ENCODE measurements at regions of chr7 and their contacts with region 1.

Region 1: GRCh38 chr7:92621026-92621540 is 30.9 kb upstream of the FAM133B start:
- DNase-seq: peak; percentile 79
- ATAC-seq: peak; percentile 79
- H3K4me3 ChIP-seq: peak overlapping the region; percentile 12; the same call in 1 of the 2 replicates
- H3K27ac ChIP-seq: peak overlapping the region; percentile 75
- H3K4me1 ChIP-seq: peaks cover 16% of the 10 kb centered on the region
- H3K27me3 ChIP-seq: no peaks in the 10 kb centered on the region
- CTCF ChIP-seq: peak; percentile 64 to 94 (median 76); a peak in 5 of 6 replicates
- EP300 ChIP-seq: no peak
- POLR2A ChIP-seq: no peak
- RAD21 ChIP-seq: peak; percentile 95

Region 2: DNA sequence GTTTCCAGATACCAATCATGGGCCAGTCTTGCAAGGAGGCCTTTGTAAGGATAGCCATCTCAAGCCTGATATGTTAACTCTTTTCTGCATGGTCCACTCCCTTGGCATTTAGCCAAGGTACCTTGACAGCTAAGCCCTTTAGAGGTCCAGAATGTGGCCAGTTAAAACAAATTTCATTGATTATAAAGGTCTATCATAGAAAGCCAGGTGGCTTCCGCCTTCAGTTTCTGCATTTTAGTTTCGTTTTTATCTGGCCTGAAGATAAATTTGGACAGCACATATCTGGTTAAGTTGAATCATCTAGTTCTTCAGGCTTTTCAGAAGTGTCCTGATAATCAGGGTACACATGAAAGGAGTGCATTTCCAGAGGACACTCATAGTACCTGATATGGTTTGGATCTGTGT is 344.6 kb before region 1 on chr7:
- CTCF ChIA-PET with region 1: no interaction called
- POLR2A ChIA-PET with region 1: no interaction called
- RAD21 ChIA-PET with region 1: no interaction called
- SMC1A ChIA-PET with region 1: no interaction called
- in situ Hi-C with region 1: no loop called
- intact Hi-C with region 1: no loop called
- DNase-seq: peak; percentile 51
- ATAC-seq: peak; percentile 93
- H3K4me3 ChIP-seq: peak overlapping the region; percentile 42
- H3K27ac ChIP-seq: peak overlapping the region; percentile 78
- H3K4me1 ChIP-seq: peaks cover 10% of the 10 kb centered on the region; the same call in 1 of the 2 replicates
- H3K27me3 ChIP-seq: no peaks in the 10 kb centered on the region
- CTCF ChIP-seq: no peak
- EP300 ChIP-seq: no peak
- POLR2A ChIP-seq: no peak
- RAD21 ChIP-seq: no peak

Region 3: GRCh38 chr7:92609921-92610518 is 11.1 kb before region 1 on chr7:
- CTCF ChIA-PET with region 1: interaction called, 30 read pairs
- POLR2A ChIA-PET with region 1: no interaction called
- RAD21 ChIA-PET with region 1: interaction called, 5 read pairs
- SMC1A ChIA-PET with region 1: interaction called, 19 read pairs
- in situ Hi-C with region 1: no loop called
- intact Hi-C with region 1: no loop called
- DNase-seq: no peak
- ATAC-seq: peak; percentile 80
- H3K4me3 ChIP-seq: no peak overlapping the region
- H3K27ac ChIP-seq: no peak overlapping the region
- H3K4me1 ChIP-seq: no peaks in the 10 kb centered on the region
- H3K27me3 ChIP-seq: no peaks in the 10 kb centered on the region
- CTCF ChIP-seq: peak in 2 of 3 experiments; percentile 29 to 42; a peak in 4 of 6 replicates
- EP300 ChIP-seq: no peak
- POLR2A ChIP-seq: no peak
- RAD21 ChIP-seq: peak; percentile 35; the same call in 1 of the 2 replicates

Region 4: DNA sequence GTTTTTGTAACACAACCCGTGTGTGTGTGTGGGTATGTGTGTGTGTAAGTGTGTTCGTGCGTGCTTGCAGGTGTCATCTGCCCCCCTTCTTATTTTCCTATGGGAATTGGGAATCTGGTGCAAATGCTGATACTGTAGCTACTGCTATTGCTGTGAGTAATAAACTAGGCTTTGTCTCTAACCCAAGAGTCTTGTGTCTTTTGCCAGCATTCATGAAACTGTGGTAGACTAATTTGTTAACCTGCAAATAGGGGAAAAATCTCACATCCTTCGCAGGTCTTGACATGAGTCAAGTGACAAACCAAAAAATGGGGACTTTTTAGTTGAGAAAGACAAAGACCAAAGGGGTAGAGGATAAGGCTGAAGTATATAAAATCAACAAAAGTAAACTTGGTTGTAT is 27.0 kb after region 1 on chr7:
- CTCF ChIA-PET with region 1: interaction called, 16 read pairs
- POLR2A ChIA-PET with region 1: no interaction called
- RAD21 ChIA-PET with region 1: interaction called, 17 read pairs
- SMC1A ChIA-PET with region 1: interaction called, 19 read pairs
- in situ Hi-C with region 1: no loop called
- intact Hi-C with region 1: loop called (anchors 2 kb)
- DNase-seq: peak; percentile 74
- ATAC-seq: peak; percentile 72
- H3K4me3 ChIP-seq: no peak overlapping the region
- H3K27ac ChIP-seq: peak overlapping the region; percentile 23; the same call in 1 of the 2 replicates
- H3K4me1 ChIP-seq: peaks cover 23% of the 10 kb centered on the region
- H3K27me3 ChIP-seq: no peaks in the 10 kb centered on the region
- CTCF ChIP-seq: no peak
- EP300 ChIP-seq: peak; percentile 86 to 92
- POLR2A ChIP-seq: no peak
- RAD21 ChIP-seq: no peak

Region 5: DNA sequence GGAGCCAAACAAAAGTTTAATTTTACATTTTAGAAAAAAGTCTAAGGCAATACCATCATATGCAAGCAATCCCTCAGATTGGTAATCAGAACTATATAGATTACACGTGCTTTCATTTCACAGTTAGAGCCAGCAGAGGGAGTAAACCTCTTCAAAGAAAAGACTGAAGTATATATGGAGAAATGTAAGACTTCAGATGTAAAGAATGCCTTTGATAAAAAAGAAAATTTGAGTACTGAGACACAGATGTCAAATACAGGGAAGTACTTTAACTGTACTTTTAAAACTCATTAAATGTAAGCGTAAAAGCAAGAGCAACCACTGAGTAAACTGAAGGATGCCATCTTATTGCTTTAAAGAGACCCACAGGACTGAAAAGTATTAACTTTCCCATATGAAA is 70.5 kb after region 1 on chr7:
- CTCF ChIA-PET with region 1: interaction called, 5 read pairs
- POLR2A ChIA-PET with region 1: no interaction called
- RAD21 ChIA-PET with region 1: interaction called, 6 read pairs
- SMC1A ChIA-PET with region 1: interaction called, 8 read pairs
- in situ Hi-C with region 1: no loop called
- intact Hi-C with region 1: loop called (anchors 1 kb)
- DNase-seq: peak; percentile 37
- ATAC-seq: peak; percentile 96
- H3K4me3 ChIP-seq: no peak overlapping the region
- H3K27ac ChIP-seq: no peak overlapping the region
- H3K4me1 ChIP-seq: no peaks in the 10 kb centered on the region
- H3K27me3 ChIP-seq: no peaks in the 10 kb centered on the region
- CTCF ChIP-seq: peak; percentile 45 to 60 (median 58); a peak in 5 of 6 replicates
- EP300 ChIP-seq: no peak
- POLR2A ChIP-seq: no peak
- RAD21 ChIP-seq: peak; percentile 86

Region 6: GRCh38 chr7:92827464-92828120 is 206.5 kb after region 1 on chr7:
- CTCF ChIA-PET with region 1: interaction called, 58 read pairs
- POLR2A ChIA-PET with region 1: interaction called, 6 read pairs
- RAD21 ChIA-PET with region 1: interaction called, 78 read pairs
- SMC1A ChIA-PET with region 1: interaction called, 44 read pairs
- in situ Hi-C with region 1: loop called (anchors 5 kb)
- intact Hi-C with region 1: no loop called
- DNase-seq: no peak
- ATAC-seq: peak; percentile 2; the same call in 2 of the 3 replicates
- H3K4me3 ChIP-seq: no peak overlapping the region
- H3K27ac ChIP-seq: no peak overlapping the region
- H3K4me1 ChIP-seq: peaks cover 16% of the 10 kb centered on the region
- H3K27me3 ChIP-seq: no peaks in the 10 kb centered on the region
- CTCF ChIP-seq: no peak
- EP300 ChIP-seq: no peak
- POLR2A ChIP-seq: no peak
- RAD21 ChIP-seq: no peak

Region 7: DNA sequence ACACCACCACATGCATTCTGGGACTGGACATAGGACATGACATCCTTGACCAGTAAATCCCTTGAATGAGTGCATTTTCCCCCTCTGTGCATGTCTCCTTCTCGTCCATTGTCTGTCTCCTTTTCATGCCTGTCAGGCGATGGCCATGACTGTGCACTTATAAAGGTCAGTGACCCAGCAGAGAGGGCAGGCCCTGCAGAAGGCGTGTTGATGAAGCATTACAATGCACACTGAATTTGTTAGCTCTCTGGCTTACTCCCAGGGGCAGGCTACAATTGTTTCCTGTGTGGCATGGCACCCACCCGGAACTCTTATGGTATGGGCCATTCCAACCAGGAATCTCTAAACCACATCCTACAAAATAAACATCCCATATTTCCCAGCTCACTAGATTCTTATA is 425.6 kb after region 1 on chr7:
- CTCF ChIA-PET with region 1: interaction called, 6 read pairs
- POLR2A ChIA-PET with region 1: no interaction called
- RAD21 ChIA-PET with region 1: interaction called, 6 read pairs
- SMC1A ChIA-PET with region 1: interaction called, 10 read pairs
- in situ Hi-C with region 1: loop called (anchors 5 kb)
- intact Hi-C with region 1: no loop called
- DNase-seq: no peak
- ATAC-seq: peak; percentile 29
- H3K4me3 ChIP-seq: no peak overlapping the region
- H3K27ac ChIP-seq: no peak overlapping the region
- H3K4me1 ChIP-seq: peaks cover 7% of the 10 kb centered on the region
- H3K27me3 ChIP-seq: no peaks in the 10 kb centered on the region
- CTCF ChIP-seq: no peak
- EP300 ChIP-seq: no peak
- POLR2A ChIP-seq: no peak
- RAD21 ChIP-seq: no peak